ENCODE measurements at regions of chr3 and their contacts with region 1.

Region 1: DNA sequence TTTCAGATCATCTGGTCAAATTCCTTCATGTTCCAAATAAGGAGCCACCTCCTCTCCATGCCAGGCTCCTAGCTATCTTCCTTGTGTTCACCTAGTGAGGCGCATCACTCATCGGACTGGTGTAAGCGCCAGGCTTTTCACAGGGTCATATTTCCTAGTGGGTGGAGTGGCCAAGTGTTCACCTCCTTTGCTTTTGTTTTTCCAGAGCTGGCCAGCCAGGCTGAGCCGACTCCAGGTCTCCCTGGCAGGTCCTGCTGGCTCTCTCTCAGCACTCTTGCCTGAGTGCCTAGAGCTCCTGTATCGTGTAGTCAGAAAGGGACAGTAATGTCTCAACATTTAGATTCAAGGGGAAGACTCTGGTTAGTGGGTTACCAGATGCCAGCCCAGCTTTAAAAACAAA is 31.0 kb downstream of the HEG1 start:
- DNase-seq: peak; percentile 82 to 91
- ATAC-seq: peak; percentile 98 to 99
- H3K4me3 ChIP-seq: no peak overlapping the region
- H3K27ac ChIP-seq: peak overlapping the region; percentile 40 to 75 (median 58)
- H3K4me1 ChIP-seq: peaks cover 17 to 30% of the 10 kb centered on the region in 2 donors
- H3K27me3 ChIP-seq: no peaks in the 10 kb centered on the region
- CTCF ChIP-seq: no peak
- POLR2A ChIP-seq: no peak

Region 2: GRCh38 chr3:125055913-125056745 is 31.3 kb after region 1 on chr3 and contains the start of gene HEG1:
- in situ Hi-C with region 1: no loop called
- intact Hi-C with region 1: loop called (anchors 2 kb)
- DNase-seq: peak; percentile 80 to 89
- ATAC-seq: peak; percentile 65 to 73
- H3K4me3 ChIP-seq: peak within 1 kb of the TSS; percentile 69 to 76 (median 73)
- H3K27ac ChIP-seq: peak within 1 kb of the TSS; percentile 84 to 89 (median 89)
- H3K4me1 ChIP-seq: peaks cover 41 to 57% of the 10 kb centered on the region in 2 donors
- H3K27me3 ChIP-seq: no peaks in the 10 kb centered on the region
- CTCF ChIP-seq: no peak
- POLR2A ChIP-seq: peak; percentile 75 to 85
- total RNA-seq, gene HEG1: 9.8 to 27.1 (median 17.6) TPM

Region 3: DNA sequence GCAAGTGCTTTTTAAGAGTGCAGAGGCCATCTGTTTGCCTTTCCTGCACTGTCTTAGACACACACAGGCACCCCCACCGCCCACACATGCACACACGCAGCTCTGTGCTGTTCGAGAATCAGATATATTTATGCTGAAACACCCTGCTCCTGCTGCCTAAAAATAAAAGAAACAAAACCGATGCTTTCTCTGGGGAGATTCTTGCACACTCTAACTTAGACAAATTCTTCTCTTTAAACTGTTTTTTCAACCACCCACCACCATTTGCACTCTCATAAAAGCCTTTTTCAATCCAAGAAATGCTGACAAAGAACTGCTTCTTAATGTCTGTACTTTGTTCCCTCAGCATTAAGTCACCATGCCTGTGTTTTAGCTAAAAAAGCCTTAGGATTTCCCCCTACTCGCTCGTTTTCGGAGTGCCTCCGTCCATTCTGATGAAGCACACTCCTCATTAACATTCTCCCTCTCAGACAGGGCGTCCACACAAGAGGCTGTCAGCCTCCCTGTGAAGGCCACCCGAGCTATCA is 161.5 kb after region 1 on chr3:
- in situ Hi-C with region 1: no loop called
- intact Hi-C with region 1: no loop called
- DNase-seq: no peak
- ATAC-seq: no peak
- H3K4me3 ChIP-seq: no peak overlapping the region
- H3K27ac ChIP-seq: no peak overlapping the region
- H3K4me1 ChIP-seq: no peaks in the 10 kb centered on the region
- H3K27me3 ChIP-seq: no peaks in the 10 kb centered on the region
- CTCF ChIP-seq: no peak
- POLR2A ChIP-seq: no peak

Measured in gastrocnemius medialis (tissue), 4 donors.